PC-3 (cell line): ENCODE measurements at regions of chr12 and their contacts with region 1.

Region 1: DNA sequence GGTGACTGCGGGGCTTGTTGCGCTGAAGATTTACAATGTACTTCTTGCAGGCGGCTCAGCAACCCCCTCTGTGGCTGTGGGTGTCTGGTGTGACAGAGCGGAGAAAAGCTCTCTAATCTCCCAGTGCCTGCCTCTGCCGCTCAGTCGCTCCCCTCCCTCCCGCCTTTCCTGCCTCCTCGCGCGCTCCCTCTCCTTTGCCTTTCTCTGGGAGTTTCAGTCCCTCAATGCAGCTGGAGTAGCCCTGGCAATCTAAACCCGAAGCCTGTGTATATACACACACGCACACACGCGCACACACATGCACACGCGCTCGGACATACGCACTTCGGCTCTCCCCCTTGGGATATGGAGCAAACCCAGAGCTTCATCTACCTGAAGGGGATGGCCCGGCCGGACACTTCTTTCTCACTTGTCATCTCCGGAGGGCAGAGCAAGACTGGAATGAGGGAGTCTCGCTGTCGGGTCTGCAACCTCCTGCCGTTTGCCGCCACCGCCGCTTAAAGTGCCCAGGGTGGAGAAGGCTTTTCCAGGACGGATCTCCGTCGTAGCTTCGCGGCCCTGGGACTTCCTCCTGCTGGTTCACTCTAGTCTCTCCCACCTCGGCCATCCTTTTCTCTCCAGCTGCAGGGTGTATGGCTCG is 599 bp upstream of the TRHDE start:
- DNase-seq: peak; percentile 52
- ATAC-seq: peak; percentile 24
- H3K4me3 ChIP-seq: peak overlapping the region; percentile 98
- H3K27ac ChIP-seq: peak overlapping the region; percentile 63
- H3K4me1 ChIP-seq: peaks cover 53% of the 10 kb centered on the region
- H3K27me3 ChIP-seq: no peaks in the 10 kb centered on the region
- CTCF ChIP-seq: no peak

Region 2: DNA sequence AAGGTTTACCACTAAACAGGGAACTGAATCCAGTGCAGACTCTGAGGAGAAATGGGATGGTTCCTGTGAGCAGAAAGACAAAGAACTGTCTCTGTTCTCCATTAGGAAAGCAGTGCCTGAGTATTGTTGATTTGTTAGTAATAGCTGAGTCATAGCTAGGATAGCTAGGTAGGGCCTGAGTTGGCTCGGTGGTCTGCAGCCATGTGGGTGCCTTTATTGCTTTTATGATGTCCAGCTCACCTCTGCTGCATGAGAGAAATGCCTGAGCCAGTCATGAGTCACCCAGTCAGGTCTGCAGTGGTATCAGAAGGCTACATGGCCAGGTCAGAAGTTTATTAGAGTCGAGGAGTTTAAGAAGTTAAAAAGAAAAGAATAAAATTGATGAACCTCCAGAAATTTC is 24.8 kb after region 1 on chr12:
- CTCF ChIA-PET with region 1: interaction called, 5 read pairs
- POLR2A ChIA-PET with region 1: interaction called, 4 read pairs
- intact Hi-C with region 1: loop called (anchors 1 kb)
- DNase-seq: peak; percentile 95
- ATAC-seq: peak; percentile 89
- H3K4me3 ChIP-seq: peak overlapping the region; percentile 48
- H3K27ac ChIP-seq: peak overlapping the region; percentile 98
- H3K4me1 ChIP-seq: peaks cover 44% of the 10 kb centered on the region
- H3K27me3 ChIP-seq: no peaks in the 10 kb centered on the region
- CTCF ChIP-seq: no peak

Region 3: DNA sequence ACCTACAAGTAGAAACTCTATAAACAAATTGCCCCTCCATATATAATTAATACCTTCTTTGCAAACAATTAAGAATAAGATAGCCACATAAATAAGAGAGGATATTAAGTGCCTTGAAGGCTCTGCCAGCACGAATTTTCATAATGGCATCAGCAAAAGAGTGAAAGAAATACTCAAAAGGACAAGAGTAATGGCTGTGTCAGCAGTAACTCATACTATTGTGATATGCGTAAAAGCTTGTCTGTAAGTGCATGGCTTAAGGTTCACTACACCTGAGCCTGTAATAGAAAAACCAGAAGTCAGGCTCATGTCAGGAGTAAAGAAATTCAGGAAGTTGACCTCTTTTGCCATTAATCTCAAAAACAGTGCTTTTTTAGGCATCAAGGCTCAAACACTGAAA is 204.7 kb after region 1 on chr12:
- CTCF ChIA-PET with region 1: no interaction called
- POLR2A ChIA-PET with region 1: no interaction called
- intact Hi-C with region 1: no loop called
- DNase-seq: no peak
- ATAC-seq: no peak
- H3K4me3 ChIP-seq: no peak overlapping the region
- H3K27ac ChIP-seq: no peak overlapping the region
- H3K4me1 ChIP-seq: no peaks in the 10 kb centered on the region
- H3K27me3 ChIP-seq: no peaks in the 10 kb centered on the region
- CTCF ChIP-seq: no peak